Right ventricle myocardium inferior (tissue), 1 donor: ENCODE measurements at regions of chr14 and their contacts with region 1.

Region 1: GRCh38 chr14:102451061-102451350 is 58.6 kb downstream of the ANKRD9 start:
- DNase-seq: no peak
- ATAC-seq: peak; percentile 91

Region 2: DNA sequence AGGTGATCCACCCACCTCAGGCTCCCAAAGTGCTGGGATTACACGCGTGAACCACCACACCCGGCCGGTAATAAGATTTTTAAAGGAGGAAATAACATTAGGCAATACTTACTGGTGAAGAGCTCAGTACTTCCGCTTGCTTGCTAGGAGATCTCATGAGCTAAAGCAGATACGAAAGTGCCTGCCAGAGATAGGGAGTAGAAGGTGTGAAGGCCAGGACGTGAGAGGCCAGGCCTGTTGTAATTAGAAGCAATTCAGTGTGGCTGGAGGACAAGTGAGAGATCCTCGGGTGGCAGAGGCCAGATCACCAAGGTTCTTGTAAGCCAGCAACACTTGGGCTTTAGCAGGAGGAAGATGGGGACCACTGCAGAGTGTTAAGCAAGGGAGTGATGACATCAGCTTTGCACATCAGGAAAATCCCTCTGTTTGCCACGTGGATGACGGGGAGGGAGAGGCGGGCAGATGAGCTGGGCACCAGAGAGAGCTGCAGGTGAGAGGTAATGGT is 80.6 kb before region 1 on chr14:
- intact Hi-C with region 1: no loop called
- DNase-seq: peak; percentile 66
- ATAC-seq: peak; percentile 75

Region 3: DNA sequence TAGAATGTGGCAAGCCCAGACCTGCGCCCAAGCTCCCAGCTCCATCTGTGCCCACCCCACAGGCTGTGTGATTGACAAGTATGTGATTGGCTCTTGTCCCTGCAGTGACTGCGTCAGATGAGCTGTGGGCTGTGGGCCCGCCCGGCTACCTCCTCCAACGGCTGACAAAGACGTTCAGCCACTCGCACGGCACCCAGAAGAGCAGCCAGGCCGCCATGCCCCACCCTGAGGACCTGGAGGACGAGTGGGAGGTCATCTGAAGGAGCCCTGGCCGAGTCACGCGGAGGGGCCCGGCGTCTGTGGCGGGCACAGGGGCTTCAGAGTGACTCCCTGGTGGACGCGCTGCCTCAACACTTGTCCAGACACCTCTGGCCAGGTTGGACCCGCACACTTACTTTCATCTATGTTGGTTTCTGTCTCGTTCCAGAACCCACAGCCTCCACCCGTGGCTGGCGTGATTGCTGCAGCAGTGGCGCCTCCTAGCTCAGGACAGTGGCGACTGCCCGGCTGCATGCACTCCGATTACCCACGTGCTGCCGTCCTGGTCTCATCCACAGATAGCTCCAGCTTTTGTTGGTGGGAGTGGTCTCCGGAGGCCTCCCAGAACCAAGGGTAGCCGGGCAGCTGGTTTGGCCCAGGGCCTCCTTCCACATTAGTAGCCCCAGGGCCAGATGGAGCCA is 47.1 kb after region 1 on chr14:
- intact Hi-C with region 1: loop called (anchors 2 kb)
- DNase-seq: no peak
- ATAC-seq: no peak

Region 4: DNA sequence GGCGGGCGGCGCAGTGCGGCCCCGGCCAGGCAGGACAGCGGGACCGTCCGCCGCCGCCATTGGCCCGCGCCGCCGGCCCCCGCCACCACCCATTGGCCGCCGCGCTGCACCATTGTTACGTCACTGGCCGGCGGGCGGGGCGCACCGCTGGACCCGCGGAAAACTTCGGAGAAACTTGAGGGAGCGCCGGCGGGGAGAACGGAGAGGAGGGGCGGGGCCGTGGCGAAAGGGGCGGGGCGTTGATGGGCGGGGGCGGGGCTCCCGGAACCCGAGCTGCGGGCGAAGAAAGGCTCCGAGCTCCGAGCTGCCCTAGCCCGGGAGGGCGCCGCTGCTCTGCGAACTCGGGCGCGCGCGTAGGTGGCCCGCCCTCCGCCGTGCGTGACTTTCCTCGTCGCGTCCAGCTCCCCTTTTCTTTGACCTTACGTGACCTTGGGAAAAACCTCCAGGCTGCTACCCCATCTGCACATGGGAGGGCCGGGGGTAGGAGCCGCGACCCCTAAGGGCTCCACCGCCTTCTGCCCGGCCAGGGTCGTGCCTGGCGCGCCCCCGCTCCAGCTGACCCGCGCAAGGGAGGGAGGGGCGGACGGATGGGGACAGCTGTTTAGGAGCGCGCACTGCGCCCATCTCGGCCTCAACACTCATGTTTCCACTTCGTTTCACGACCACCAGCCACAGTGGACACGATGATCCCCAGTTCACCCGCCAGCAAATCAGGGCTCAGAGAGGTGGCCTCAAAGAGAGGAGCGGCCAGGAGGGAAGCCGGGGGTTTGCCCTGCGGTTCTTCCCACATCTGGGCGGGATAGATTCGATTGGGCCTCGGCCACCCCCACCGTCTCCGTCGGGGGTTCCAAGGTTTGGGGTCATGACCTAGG is 59.0 kb after region 1 on chr14 and contains the start of gene ANKRD9:
- intact Hi-C with region 1: loop called (anchors 5 kb)
- DNase-seq: peak; percentile 98
- ATAC-seq: peak; percentile 80
- total RNA-seq, gene ANKRD9: 148 TPM